ENCODE measurements at regions of chr2 and their contacts with region 1.

Region 1: DNA sequence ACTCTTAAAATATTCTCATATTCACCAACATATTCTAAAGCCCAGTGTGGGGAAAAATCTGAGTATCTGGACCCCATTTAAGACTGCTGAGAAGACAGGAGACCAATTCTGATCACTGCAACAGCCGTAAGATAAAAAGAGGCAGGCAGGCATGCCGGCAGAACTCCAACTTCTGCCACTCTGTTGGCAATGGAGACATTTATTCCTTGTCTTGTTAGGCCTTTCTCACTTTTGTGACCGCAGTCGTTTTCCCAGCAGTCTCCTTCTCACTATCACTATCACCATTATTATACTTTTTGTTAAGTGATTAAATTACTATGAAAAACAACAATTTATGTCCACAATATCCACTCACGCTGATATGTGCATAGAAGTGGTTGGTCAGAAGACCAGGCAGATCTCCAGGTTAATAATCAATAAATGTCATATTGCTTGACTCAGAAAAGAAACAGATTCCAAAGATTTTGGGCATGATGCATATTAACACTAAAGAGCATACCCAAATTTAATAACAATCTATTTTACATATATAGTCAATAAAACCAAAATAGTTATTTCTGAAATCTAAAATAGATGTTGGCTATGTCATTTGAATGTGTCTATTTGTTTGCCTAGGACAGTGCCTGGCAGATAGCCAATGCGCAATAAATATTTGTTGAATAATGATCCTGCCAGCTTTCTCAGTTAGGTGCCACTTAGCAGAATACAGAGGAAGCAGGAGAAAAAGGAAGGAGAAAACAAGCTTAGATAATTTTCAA is 38.2 kb downstream of the SESTD1 start:
- DNase-seq: peak in 2 of 5 donors; percentile 34 to 43
- ATAC-seq: peak in 3 of 4 donors; percentile 29 to 60 (median 33)
- H3K4me3 ChIP-seq: no peak overlapping the region
- H3K27ac ChIP-seq: peak overlapping the region in 1 of 12 donors; percentile 3
- H3K4me1 ChIP-seq: peaks cover 0 to 53% (median 14%) of the 10 kb centered on the region in 12 donors
- H3K27me3 ChIP-seq: no peaks in the 10 kb centered on the region
- CTCF ChIP-seq: no peak
- POLR2A ChIP-seq: no peak

Region 2: DNA sequence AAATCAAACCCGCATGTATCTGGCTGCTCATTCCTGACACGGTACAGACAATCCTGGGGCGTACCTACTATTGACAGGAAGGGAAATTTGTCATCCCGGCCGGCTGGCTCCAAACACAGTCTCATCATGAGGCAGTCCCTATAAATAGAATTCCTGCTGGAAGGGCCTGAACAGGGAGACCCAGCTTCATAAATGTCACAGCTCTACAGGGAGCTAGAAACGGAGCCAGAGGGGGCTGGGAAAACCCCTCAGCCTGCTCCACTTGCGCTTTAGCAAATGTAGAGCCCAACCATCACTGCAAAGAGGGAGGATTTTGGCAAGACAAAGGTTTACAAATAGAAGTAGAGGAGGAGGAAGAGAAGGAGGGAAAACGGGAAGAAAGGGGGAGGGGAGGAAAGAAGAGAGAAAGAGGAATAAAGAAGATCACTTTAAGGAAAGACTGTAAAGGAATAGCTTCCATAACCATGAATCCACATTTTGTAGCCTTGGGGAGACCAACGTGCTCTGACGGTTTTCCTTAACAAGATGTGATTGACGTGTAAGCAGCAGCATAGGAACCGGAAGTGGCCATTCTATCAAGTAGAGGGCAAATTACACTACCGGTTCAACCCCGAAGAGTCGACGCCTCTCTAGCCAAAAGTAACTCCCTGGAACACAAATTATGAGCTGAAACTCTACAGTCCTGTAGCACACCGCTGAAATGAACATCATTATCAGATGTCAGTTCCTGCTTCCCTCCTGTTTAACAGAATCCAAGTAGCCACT is 362.3 kb before region 1 on chr2:
- intact Hi-C with region 1: no loop called
- DNase-seq: peak; percentile 82 to 92 (median 85)
- ATAC-seq: peak; percentile 84 to 89 (median 88)
- H3K4me3 ChIP-seq: peak overlapping the region in 9 of 12 donors; percentile 8 to 34 (median 21)
- H3K27ac ChIP-seq: peak overlapping the region; percentile 73 to 96 (median 92)
- H3K4me1 ChIP-seq: peaks cover 4 to 68% (median 48%) of the 10 kb centered on the region in 12 donors
- H3K27me3 ChIP-seq: no peaks in the 10 kb centered on the region
- CTCF ChIP-seq: no peak
- POLR2A ChIP-seq: peak in 1 of 2 donors; percentile 45

Region 3: DNA sequence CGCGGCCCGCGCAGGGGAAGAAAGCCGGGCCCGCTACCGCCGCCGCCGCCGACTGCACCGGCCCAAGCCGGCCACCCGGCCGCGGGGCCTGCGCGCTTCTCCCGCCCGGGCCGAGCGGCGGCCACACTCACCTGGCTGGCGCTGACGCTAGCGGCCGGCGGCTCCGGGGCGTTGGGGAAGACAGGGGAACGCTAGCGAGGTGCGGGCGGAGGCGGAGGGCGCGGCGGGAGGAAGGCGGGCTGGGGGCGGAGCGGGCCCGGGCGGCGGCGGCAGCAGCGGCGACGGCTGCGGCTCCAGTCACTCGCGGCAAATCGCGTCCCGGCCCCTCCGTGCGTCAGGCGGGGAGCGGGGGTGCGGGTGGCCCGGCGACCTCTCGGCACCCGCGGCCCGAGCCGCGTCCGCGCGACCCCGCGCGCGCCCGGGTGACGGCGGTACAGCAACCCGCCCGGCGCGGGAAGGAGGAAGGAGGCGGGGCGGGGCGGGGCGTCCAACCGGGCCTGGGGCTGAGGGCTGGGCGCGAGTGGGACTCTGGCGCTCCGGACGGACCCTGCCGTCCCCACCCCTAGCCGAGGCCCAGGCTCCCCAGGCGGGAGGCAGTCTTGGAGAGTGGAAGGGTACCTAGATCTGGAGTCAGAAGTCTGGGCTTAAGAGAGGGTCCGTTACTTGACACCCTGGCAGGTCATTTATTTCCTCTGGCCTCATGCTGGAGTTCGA is 38.1 kb after region 1 on chr2 and contains the start of gene SESTD1:
- intact Hi-C with region 1: loop called in 2 of 10 experiments (anchors 5 kb)
- DNase-seq: peak; percentile 74 to 86 (median 80)
- ATAC-seq: peak; percentile 63 to 87 (median 86)
- H3K4me3 ChIP-seq: peak within 1 kb of the TSS; percentile 50 to 90 (median 78)
- H3K27ac ChIP-seq: peak within 1 kb of the TSS; percentile 66 to 94 (median 84)
- H3K4me1 ChIP-seq: peaks cover 0 to 37% (median 14%) of the 10 kb centered on the region in 12 donors
- H3K27me3 ChIP-seq: no peaks in the 10 kb centered on the region
- CTCF ChIP-seq: peak in 1 of 12 donors; percentile 2
- POLR2A ChIP-seq: peak in 1 of 2 donors; percentile 38
- total RNA-seq, gene SESTD1: 14.4 to 48.7 (median 32.6) TPM

Region 4: DNA sequence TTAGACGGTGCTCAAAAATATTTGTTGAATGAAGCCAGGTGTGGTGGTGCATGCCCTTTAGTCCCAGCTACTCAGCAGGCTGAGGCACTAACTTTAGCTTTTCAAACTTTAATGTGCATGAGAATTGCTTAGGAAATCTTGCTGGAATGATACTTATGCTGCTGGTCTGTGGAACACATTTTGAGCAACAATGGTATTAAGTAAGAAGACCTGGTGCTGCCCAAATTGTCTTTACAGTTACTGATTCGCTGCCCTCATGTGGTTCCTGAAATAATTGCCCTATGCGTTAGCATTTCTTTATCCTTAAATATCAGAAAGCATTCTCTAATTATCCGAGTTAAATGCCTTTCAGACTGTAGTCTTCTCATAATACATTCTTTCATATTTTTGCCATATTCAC is 114.3 kb after region 1 on chr2:
- intact Hi-C with region 1: loop called in 7 of 10 experiments (anchors 5 to 10 kb)
- DNase-seq: no peak
- ATAC-seq: peak in 1 of 4 donors; percentile 43
- H3K4me3 ChIP-seq: no peak overlapping the region
- H3K27ac ChIP-seq: no peak overlapping the region
- H3K4me1 ChIP-seq: peaks cover 0 to 23% (median 3%) of the 10 kb centered on the region in 12 donors
- H3K27me3 ChIP-seq: no peaks in the 10 kb centered on the region
- CTCF ChIP-seq: peak in 7 of 12 donors; percentile 10 to 46 (median 34)
- POLR2A ChIP-seq: no peak

Region 5: DNA sequence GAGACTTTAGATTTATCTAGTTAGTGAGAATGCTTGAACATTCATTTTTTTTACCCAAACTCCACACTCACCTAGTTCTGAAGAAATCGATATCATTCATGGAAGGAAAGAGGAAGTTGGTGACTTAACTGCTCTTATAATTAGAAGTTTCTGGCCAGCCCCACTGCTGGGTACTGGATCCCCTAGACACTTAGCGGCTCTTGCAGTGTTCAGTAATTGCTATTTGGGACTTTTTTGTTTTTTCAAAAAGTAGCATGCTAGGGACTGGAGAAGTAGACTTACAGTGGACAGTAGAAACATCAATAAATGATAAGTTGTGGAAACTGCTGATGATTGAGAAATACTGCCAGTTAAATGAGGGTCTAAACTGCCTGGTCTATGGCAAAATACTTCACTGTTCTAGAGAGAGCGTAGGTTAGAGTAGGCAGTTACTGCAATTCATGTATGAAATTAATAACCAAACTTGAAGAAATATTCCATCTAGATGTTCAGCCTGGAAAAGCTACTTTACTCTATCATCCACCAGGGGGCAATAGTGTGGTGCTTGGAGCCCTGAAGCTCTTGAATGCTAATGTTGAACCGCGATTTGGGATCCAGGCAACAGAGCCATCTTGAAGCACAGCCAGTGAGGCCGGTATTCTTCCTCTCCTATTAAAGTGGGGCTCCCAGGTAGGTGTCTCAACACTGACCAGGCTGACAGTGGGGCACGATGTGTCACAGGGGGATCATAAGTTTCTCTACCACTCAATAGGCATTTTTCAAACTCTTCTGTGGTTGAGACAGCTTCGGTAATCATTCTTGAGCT is 184.4 kb after region 1 on chr2:
- intact Hi-C with region 1: loop called in 1 of 10 experiments (anchors 10 kb)
- DNase-seq: peak in 2 of 5 donors; percentile 17 to 40
- ATAC-seq: peak in 3 of 4 donors; percentile 49 to 73 (median 50)
- H3K4me3 ChIP-seq: peak overlapping the region in 1 of 12 donors; percentile 14
- H3K27ac ChIP-seq: no peak overlapping the region
- H3K4me1 ChIP-seq: no peaks in the 10 kb centered on the region
- H3K27me3 ChIP-seq: peaks cover 0 to 11% (median 0%) of the 10 kb centered on the region in 9 donors
- CTCF ChIP-seq: peak; percentile 58 to 81 (median 68)
- POLR2A ChIP-seq: no peak

Region 6: GRCh38 chr2:179422037-179422643 is 195.8 kb after region 1 on chr2:
- intact Hi-C with region 1: loop called in 4 of 10 experiments (anchors 10 kb)
- DNase-seq: peak; percentile 40 to 72 (median 60)
- ATAC-seq: peak in 2 of 4 donors; percentile 52 to 73
- H3K4me3 ChIP-seq: no peak overlapping the region
- H3K27ac ChIP-seq: no peak overlapping the region
- H3K4me1 ChIP-seq: no peaks in the 10 kb centered on the region
- H3K27me3 ChIP-seq: peaks cover 0 to 8% (median 0%) of the 10 kb centered on the region in 9 donors
- CTCF ChIP-seq: peak; percentile 46 to 77 (median 68)
- POLR2A ChIP-seq: no peak

Region 7: DNA sequence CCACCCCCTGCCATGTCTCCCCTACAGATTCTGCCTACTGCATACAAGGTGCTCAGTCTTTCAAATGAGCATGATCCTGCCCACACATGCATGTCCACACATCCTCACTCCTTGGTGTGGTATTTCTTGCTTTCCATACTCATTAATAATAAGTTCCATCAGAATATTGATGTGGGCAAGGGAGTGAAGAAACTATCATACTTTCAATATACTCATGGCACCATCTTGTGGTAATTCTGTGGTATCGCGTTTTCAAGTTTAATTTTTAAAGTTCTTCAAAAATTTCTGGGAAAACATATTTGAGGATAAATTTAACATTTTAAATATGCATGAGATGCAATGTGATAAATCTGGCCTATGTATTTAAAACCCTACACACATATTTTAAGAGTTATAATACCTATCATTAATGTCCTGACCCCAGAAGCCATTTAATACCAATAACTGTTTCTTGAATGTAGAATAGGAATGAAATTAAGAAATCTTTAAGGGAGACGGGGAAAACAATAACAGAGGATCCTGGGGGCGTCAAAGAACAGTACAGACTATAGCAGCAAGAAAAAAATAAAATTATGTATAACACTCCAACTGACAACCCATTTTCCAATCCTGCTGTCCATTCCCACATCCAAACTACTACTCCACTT is 524.9 kb after region 1 on chr2:
- intact Hi-C with region 1: loop called in 3 of 10 experiments (anchors 10 kb)
- DNase-seq: no peak
- ATAC-seq: no peak
- H3K4me3 ChIP-seq: no peak overlapping the region
- H3K27ac ChIP-seq: no peak overlapping the region
- H3K4me1 ChIP-seq: no peaks in the 10 kb centered on the region
- H3K27me3 ChIP-seq: peaks cover 0 to 5% (median 0%) of the 10 kb centered on the region in 9 donors
- CTCF ChIP-seq: peak; percentile 37 to 73 (median 64)
- POLR2A ChIP-seq: no peak

Measured in heart left ventricle (tissue), 16 donors.